B cell (primary cell): ENCODE measurements at regions of chr2 and their contacts with region 1.

Region 1: GRCh38 chr2:181305301-181306123 is 151.7 kb upstream of the ITGA4 start:
- DNase-seq: peak; percentile 74
- ATAC-seq: peak; percentile 50
- H3K4me3 ChIP-seq: peak overlapping the region in 2 of 5 experiments; percentile 10 to 68
- H3K4me3 Mint-ChIP-seq: peak overlapping the region; percentile 77
- H3K27ac ChIP-seq: peak overlapping the region; percentile 92 to 97
- H3K27ac Mint-ChIP-seq: peak overlapping the region; percentile 94
- H3K4me1 ChIP-seq: peaks cover 52 to 62% of the 10 kb centered on the region in 2 donors
- H3K4me1 Mint-ChIP-seq: peaks cover 65% of the 10 kb centered on the region
- H3K27me3 ChIP-seq: no peaks in the 10 kb centered on the region
- H3K27me3 Mint-ChIP-seq: no peaks in the 10 kb centered on the region
- CTCF ChIP-seq: no peak

Region 2: GRCh38 chr2:180334514-180334913 is 971.0 kb before region 1 on chr2:
- CTCF ChIA-PET with region 1: no interaction called
- POLR2A ChIA-PET with region 1: no interaction called
- intact Hi-C with region 1: loop called (anchors 10 kb)
- DNase-seq: peak; percentile 58
- ATAC-seq: peak; percentile 93
- H3K4me3 ChIP-seq: no peak overlapping the region
- H3K4me3 Mint-ChIP-seq: peak overlapping the region; percentile 36
- H3K27ac ChIP-seq: peak overlapping the region in 1 of 2 donors; percentile 50
- H3K27ac Mint-ChIP-seq: peak overlapping the region; percentile 78
- H3K4me1 ChIP-seq: peaks cover 8% of the 10 kb centered on the region in 2 donors
- H3K4me1 Mint-ChIP-seq: peaks cover 16% of the 10 kb centered on the region
- H3K27me3 ChIP-seq: no peaks in the 10 kb centered on the region
- H3K27me3 Mint-ChIP-seq: no peaks in the 10 kb centered on the region
- CTCF ChIP-seq: no peak

Region 3: DNA sequence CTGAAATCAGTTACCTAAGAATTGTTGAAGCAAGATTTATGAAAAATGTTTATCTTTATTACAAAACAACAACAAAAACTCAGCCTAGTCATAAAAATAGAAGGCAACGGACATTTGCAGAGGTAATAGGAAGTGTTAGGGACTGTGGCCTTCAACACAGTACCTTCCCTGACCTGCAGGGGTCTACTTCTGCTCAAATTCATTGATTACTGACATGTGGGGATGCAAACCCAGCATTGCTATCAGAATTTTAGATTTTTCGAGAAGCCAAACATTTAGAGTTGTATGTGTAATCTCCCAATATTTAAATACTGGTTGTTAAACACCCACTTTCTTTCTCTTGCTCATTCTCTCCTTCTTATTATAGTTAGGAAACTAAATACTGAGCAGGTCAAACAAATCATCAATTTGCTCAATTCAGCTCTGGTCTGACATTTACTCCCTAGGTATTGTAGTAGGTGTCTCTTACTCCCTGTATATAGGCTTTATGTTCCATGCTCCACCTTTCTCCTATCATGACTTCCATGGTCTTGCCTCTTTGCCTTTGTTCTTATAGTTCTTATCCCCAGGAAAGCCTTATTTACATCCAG is 126.6 kb before region 1 on chr2:
- CTCF ChIA-PET with region 1: interaction called, 4 read pairs
- POLR2A ChIA-PET with region 1: no interaction called
- intact Hi-C with region 1: loop called (anchors 5 kb)
- DNase-seq: peak; percentile 51
- ATAC-seq: peak; percentile 75
- H3K4me3 ChIP-seq: no peak overlapping the region
- H3K4me3 Mint-ChIP-seq: no peak overlapping the region
- H3K27ac ChIP-seq: no peak overlapping the region
- H3K27ac Mint-ChIP-seq: no peak overlapping the region
- H3K4me1 ChIP-seq: peaks cover 4 to 5% of the 10 kb centered on the region in 2 donors
- H3K4me1 Mint-ChIP-seq: peaks cover 9% of the 10 kb centered on the region
- H3K27me3 ChIP-seq: no peaks in the 10 kb centered on the region
- H3K27me3 Mint-ChIP-seq: no peaks in the 10 kb centered on the region
- CTCF ChIP-seq: peak; percentile 78

Region 4: DNA sequence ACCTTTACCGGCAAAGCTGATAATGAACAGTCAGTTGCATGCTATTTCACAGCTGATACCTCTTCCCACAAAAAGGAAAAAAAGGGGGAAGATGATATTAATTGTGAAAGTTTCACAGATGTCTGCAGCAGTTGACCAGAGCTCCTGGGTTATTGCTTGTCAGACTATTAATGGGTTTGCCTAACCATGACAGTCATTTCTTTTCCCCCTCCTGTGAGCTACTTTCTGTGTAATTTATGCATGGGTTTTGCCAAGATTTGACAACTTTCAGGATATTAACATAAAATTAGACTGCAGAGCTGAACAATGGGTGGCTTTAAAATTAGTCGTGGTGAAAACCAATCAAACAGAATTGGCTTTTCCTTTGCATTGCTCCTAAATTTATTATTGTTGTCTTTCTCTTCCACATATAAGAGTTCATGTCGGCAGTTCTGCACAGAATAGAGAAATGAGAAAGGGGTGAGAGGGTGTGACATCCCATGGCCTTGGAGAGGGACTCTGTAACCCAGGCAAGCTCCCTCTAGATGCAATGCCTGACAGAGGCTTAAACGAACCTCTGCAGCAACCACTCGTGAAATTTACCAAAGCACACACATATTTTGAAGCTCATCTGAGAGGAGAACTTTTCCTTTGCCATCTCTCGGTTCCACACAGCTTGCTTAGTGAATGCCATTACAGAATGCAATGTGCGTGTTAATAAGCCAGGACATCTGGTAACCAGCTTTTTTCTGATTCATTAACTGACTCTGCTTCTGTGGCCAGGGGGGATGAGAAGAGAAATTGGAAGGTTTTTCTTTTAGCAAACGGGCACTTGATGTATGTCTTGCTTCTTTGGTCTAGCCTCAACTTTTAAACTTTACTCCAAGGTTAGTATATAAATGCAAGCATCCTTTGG is 69.5 kb after region 1 on chr2:
- CTCF ChIA-PET with region 1: interaction called, 12 read pairs
- POLR2A ChIA-PET with region 1: no interaction called
- intact Hi-C with region 1: no loop called
- DNase-seq: no peak
- ATAC-seq: peak; percentile 58
- H3K4me3 ChIP-seq: no peak overlapping the region
- H3K4me3 Mint-ChIP-seq: peak overlapping the region; percentile 37
- H3K27ac ChIP-seq: no peak overlapping the region
- H3K27ac Mint-ChIP-seq: no peak overlapping the region
- H3K4me1 ChIP-seq: peaks cover 25 to 27% of the 10 kb centered on the region in 2 donors
- H3K4me1 Mint-ChIP-seq: peaks cover 47% of the 10 kb centered on the region
- H3K27me3 ChIP-seq: no peaks in the 10 kb centered on the region
- H3K27me3 Mint-ChIP-seq: no peaks in the 10 kb centered on the region
- CTCF ChIP-seq: no peak

Region 5: GRCh38 chr2:181438261-181438660 is 132.7 kb after region 1 on chr2:
- CTCF ChIA-PET with region 1: interaction called, 10 read pairs
- POLR2A ChIA-PET with region 1: no interaction called
- intact Hi-C with region 1: no loop called
- DNase-seq: peak; percentile 50
- ATAC-seq: peak; percentile 21
- H3K4me3 ChIP-seq: no peak overlapping the region
- H3K4me3 Mint-ChIP-seq: no peak overlapping the region
- H3K27ac ChIP-seq: no peak overlapping the region
- H3K27ac Mint-ChIP-seq: peak overlapping the region; percentile 7
- H3K4me1 ChIP-seq: peaks cover 12 to 13% of the 10 kb centered on the region in 2 donors
- H3K4me1 Mint-ChIP-seq: peaks cover 21% of the 10 kb centered on the region
- H3K27me3 ChIP-seq: no peaks in the 10 kb centered on the region
- H3K27me3 Mint-ChIP-seq: no peaks in the 10 kb centered on the region
- CTCF ChIP-seq: no peak

Region 6: DNA sequence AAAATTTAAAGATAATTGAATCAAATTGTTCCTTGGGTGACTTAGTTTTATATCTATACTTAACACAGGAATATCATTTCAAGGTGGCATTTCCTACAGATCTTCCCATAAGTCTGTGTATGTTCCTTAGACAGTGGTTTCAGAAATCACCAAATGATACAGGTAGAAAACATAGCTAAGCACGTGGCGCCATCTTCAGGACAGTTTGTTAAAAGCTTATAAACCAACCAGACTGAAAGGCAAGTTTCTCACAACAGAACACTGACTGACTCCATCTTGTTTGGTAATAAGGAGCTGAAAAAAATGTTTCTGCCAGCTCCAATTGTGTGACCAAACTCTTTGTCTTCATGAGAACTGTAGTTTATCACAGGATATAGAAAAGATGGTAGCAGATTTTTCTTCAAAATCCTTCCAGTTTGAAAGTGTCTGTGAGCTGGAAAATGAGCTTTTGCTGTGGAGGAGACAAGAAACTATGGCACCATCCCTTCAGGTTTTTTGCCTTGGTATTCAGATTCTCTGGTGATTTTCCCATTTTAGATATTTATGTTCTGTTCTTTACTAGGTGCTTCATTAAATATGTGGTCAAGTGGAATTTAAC is 409.6 kb after region 1 on chr2:
- CTCF ChIA-PET with region 1: interaction called, 14 read pairs
- POLR2A ChIA-PET with region 1: no interaction called
- intact Hi-C with region 1: loop called (anchors 5 kb)
- DNase-seq: peak; percentile 78
- ATAC-seq: peak; percentile 69
- H3K4me3 ChIP-seq: no peak overlapping the region
- H3K4me3 Mint-ChIP-seq: no peak overlapping the region
- H3K27ac ChIP-seq: no peak overlapping the region
- H3K27ac Mint-ChIP-seq: no peak overlapping the region
- H3K4me1 ChIP-seq: no peaks in the 10 kb centered on the region
- H3K4me1 Mint-ChIP-seq: no peaks in the 10 kb centered on the region
- H3K27me3 ChIP-seq: no peaks in the 10 kb centered on the region
- H3K27me3 Mint-ChIP-seq: no peaks in the 10 kb centered on the region
- CTCF ChIP-seq: peak; percentile 84